Aorta (tissue), 5 donors: ENCODE measurements at regions of chr4 and their contacts with region 1.

Region 1: DNA sequence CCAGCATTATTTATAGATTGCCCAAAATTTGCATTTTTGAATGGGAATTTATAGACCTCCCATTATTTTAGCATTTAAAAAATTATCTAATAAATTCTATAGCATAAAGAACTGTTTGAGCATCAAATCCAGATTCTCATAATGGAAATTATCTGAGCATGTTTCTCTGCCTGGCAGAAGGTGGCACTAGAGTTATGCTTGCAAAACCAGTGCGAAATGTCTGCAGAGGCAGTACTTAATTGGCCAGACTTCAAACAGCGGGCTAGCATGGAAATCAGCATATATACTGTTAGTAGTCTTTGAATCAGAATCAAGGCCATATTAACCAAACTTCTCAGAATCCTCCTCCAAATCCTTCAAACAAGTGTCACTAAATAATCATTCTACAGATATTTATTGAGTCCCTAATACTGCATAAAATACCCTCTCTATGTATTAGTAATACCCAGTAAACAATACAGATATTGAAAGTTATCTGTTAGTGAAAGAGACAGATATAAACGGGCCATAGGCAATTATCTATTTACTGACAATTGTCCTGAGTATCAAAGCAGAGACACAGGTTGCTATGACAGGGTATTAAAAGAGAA is 78.7 kb upstream of the DCLK2 start:
- DNase-seq: no peak
- ATAC-seq: no peak
- H3K4me3 ChIP-seq: no peak overlapping the region
- H3K27ac ChIP-seq: no peak overlapping the region
- H3K4me1 ChIP-seq: no peaks in the 10 kb centered on the region
- H3K27me3 ChIP-seq: no peaks in the 10 kb centered on the region

Region 2: GRCh38 chr4:150209140-150209829 is 209.7 kb after region 1 on chr4:
- intact Hi-C with region 1: loop called (anchors 2 to 10 kb)
- DNase-seq: peak; percentile 76 to 89
- ATAC-seq: peak; percentile 71
- H3K4me3 ChIP-seq: no peak overlapping the region
- H3K27ac ChIP-seq: no peak overlapping the region
- H3K4me1 ChIP-seq: peaks cover 0 to 3% of the 10 kb centered on the region in 2 donors
- H3K27me3 ChIP-seq: no peaks in the 10 kb centered on the region

Region 3: DNA sequence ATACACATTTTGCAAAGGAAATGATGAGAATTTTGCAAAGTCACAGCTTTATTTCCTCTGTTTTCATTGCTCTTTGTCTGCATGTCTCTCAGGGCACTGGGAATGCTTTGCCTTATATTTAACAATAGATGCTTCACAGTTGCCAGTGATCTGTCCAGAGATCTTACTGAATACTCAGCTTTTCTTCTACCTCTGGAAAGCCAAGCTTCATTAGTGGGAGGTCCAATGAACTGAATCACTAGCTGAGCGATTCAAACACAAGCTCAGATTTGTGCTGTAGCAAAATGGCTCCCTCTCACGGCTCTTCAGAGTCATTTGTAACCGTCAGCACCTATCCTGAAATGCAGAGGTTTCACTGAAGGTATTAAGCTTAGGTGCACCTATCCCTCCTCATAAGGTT is 217.6 kb after region 1 on chr4:
- intact Hi-C with region 1: loop called in 1 of 2 experiments (anchors 10 kb)
- DNase-seq: no peak
- ATAC-seq: no peak
- H3K4me3 ChIP-seq: no peak overlapping the region
- H3K27ac ChIP-seq: no peak overlapping the region
- H3K4me1 ChIP-seq: peaks cover 0 to 4% of the 10 kb centered on the region in 2 donors
- H3K27me3 ChIP-seq: no peaks in the 10 kb centered on the region

Region 4: DNA sequence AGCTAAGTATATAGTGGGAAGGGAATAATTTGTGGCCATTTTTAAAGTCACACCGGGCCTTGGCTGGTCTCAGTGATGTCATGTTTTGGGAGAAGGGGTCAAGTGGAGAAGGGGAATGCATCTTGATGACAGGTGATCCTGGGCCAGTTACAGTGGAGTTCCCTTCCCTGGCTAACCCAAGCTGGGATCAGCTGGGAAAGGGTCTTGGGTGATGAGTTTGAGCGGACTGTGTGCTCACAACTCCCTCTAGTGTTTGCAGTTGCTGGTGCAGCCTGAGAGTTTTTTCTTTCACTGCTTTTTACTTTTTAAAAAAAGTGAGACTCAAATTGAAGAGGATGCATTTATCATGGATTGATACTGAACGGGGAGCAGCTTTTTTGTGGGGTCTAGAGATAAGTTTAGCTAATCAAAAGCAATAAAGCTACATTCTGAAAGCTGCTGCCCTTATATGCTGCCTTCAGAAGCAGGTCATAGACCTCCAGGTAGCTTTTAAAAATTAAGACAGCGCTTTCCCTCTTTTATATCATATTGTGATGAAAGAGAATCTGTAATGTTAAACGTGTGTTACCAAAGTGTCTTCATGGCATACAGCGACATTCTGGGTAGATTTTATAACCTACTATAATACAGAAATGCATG is 243.4 kb after region 1 on chr4:
- intact Hi-C with region 1: loop called (anchors 5 kb)
- DNase-seq: no peak
- ATAC-seq: peak; percentile 64
- H3K4me3 ChIP-seq: no peak overlapping the region
- H3K27ac ChIP-seq: no peak overlapping the region
- H3K4me1 ChIP-seq: no peaks in the 10 kb centered on the region
- H3K27me3 ChIP-seq: no peaks in the 10 kb centered on the region

Region 5: DNA sequence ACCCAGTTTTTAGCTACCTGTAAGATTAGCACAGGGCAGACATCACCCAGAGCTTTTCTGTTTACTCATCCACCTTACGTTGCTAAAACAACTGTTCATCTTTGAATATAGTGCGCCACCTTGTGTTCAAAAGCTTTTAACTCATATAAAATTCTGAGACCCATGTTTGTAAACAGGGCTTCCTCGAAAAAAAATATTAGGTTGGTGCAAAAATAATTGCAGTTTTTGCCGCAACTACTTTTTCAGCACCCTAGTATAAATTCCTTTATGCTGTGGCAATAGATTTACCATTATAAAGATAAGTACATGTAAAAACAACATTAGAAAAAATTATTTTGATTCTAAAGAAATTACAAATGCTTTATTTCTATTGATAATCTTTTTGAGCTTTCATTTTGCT is 867.6 kb after region 1 on chr4:
- intact Hi-C with region 1: loop called (anchors 5 kb)
- DNase-seq: no peak
- ATAC-seq: peak; percentile 75
- H3K4me3 ChIP-seq: no peak overlapping the region
- H3K27ac ChIP-seq: no peak overlapping the region
- H3K4me1 ChIP-seq: no peaks in the 10 kb centered on the region
- H3K27me3 ChIP-seq: no peaks in the 10 kb centered on the region